A549 (cell line): ENCODE measurements at regions of chr2 and their contacts with region 1.

Region 1: DNA sequence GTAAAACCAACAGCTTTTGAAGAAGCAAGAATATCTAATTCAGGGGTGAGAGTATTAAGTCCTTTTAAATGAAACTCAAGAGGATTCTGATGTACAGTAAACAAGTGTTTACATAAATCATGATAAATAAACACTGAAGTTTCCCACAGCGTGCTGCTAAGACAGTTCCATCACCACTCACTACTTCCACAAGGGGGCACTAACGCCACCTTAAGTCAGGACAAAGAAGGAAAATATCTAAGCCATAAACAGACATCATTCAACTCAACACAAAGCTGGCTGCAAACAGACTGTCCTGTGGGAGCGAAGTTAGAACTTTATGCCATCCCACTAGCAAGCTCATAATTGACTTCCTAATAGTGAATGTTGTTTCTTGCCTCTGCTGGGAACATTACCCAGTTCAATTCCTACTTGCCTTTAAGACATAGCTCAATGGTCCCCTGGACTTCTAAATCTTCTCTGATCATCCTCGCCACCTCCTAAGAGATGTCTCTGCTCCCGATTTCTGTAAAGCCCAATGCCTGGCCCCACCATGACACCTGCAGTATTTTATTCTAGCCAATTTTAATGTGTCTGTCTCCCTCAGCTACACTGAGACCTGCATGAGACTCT is 36.5 kb downstream of the MRPL44 start:
- DNase-seq: peak; percentile 65 to 88
- ATAC-seq: peak; percentile 83 to 90
- H3K4me3 ChIP-seq: no peak overlapping the region
- H3K27ac ChIP-seq: peak overlapping the region in 1 of 2 experiments; percentile 2; a peak in 1 of 6 replicates
- H3K4me1 ChIP-seq: peaks cover 19% of the 10 kb centered on the region; the same call in 2 of the 3 replicates
- CTCF ChIP-seq: peak; percentile 85
- EP300 ChIP-seq: no peak
- POLR2A ChIP-seq: no peak
- RAD21 ChIP-seq: peak; percentile 92 to 94

Region 2: GRCh38 chr2:223976635-223977226 is 17.0 kb before region 1 on chr2:
- CTCF ChIA-PET with region 1: interaction called, 54 read pairs
- POLR2A ChIA-PET with region 1: no interaction called
- DNase-seq: no peak
- ATAC-seq: no peak; a peak in 1 of 6 replicates
- H3K4me3 ChIP-seq: no peak overlapping the region
- H3K27ac ChIP-seq: no peak overlapping the region
- H3K4me1 ChIP-seq: no peaks in the 10 kb centered on the region; the same call in 2 of the 3 replicates
- CTCF ChIP-seq: no peak
- EP300 ChIP-seq: no peak
- POLR2A ChIP-seq: no peak
- RAD21 ChIP-seq: no peak

Region 3: DNA sequence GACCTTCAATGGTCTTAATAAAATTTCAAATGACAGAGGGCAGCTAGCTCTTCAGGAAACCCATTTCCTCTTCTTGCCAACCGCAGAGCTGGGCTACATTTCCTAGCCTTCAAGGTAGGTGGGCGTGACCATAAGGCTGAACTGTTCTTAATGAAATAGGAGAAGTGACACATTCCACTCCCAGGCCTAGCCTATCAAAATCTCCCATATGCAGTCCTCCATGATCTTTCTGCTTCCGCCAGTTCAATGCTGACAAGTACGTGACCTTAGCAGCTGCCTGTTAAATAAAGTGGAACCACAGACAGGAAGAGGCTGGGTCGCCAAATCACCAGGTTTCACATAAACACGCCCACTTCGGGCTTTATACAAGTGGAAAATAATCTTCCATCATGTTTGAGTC is 32.1 kb after region 1 on chr2:
- CTCF ChIA-PET with region 1: interaction called, 15 read pairs
- POLR2A ChIA-PET with region 1: no interaction called
- DNase-seq: no peak
- ATAC-seq: no peak
- H3K4me3 ChIP-seq: no peak overlapping the region
- H3K27ac ChIP-seq: no peak overlapping the region
- H3K4me1 ChIP-seq: peaks cover 37% of the 10 kb centered on the region
- CTCF ChIP-seq: no peak
- EP300 ChIP-seq: no peak
- POLR2A ChIP-seq: no peak
- RAD21 ChIP-seq: no peak

Region 4: DNA sequence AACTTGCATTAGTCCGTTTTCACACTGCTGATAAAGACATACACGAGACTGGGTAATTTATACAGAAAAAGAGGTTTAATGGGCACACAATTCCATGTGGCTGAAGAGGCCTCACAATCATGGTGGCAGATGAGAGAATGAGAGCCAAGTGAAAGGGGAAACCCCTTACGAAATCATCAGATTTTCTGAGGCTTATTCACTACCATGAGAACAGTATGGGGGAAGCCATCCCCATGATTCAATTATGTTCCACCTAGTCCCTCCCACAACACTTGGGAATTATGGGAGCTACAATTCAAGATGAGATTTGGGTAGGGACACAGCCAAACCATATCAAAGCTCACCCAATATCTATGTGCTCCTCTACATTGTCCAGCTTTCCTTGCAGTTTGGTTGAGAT is 61.4 kb after region 1 on chr2:
- CTCF ChIA-PET with region 1: interaction called, 18 read pairs
- POLR2A ChIA-PET with region 1: no interaction called
- DNase-seq: no peak
- ATAC-seq: no peak
- H3K4me3 ChIP-seq: no peak overlapping the region
- H3K27ac ChIP-seq: no peak overlapping the region
- H3K4me1 ChIP-seq: no peaks in the 10 kb centered on the region
- CTCF ChIP-seq: no peak
- EP300 ChIP-seq: no peak
- POLR2A ChIP-seq: no peak
- RAD21 ChIP-seq: no peak

Region 5: DNA sequence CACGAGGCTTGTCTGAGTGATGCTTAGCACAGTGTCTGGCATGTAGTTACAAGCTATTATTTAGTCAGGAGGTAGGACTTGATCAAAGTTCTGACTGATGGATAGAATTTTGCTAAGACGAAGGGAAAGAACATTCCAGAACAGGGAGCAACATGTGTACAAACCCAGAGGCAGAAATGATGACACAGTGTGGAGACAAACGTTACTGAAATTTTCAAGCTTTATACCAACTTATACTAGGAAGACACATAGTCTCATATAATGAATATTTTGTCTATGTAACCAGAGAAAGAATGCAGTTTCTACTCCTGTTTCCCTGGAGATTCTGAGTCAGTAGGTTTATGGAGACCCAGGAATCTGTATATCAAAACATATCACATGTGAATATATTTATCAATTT is 284.8 kb after region 1 on chr2:
- CTCF ChIA-PET with region 1: interaction called, 360 read pairs
- POLR2A ChIA-PET with region 1: no interaction called
- DNase-seq: no peak
- ATAC-seq: no peak; a peak in 2 of 6 replicates
- H3K4me3 ChIP-seq: no peak overlapping the region
- H3K27ac ChIP-seq: no peak overlapping the region
- H3K4me1 ChIP-seq: no peaks in the 10 kb centered on the region
- CTCF ChIP-seq: no peak
- EP300 ChIP-seq: no peak
- POLR2A ChIP-seq: no peak
- RAD21 ChIP-seq: no peak